Breast epithelium (tissue), 4 donors: ENCODE measurements at regions of chr7 and their contacts with region 1.

Region 1: GRCh38 chr7:92854501-92855238 is 18.3 kb upstream of the CDK6 start:
- DNase-seq: no peak
- H3K4me3 ChIP-seq: no peak overlapping the region
- H3K27ac ChIP-seq: no peak overlapping the region
- H3K4me1 ChIP-seq: no peaks in the 10 kb centered on the region
- H3K27me3 ChIP-seq: no peaks in the 10 kb centered on the region
- CTCF ChIP-seq: no peak
- POLR2A ChIP-seq: no peak

Region 2: GRCh38 chr7:92833024-92833765 is 21.5 kb before region 1 on chr7:
- intact Hi-C with region 1: no loop called
- DNase-seq: peak; percentile 77 to 83
- H3K4me3 ChIP-seq: peak overlapping the region; percentile 81 to 85 (median 83)
- H3K27ac ChIP-seq: peak overlapping the region; percentile 81 to 88
- H3K4me1 ChIP-seq: no peaks in the 10 kb centered on the region
- H3K27me3 ChIP-seq: no peaks in the 10 kb centered on the region
- CTCF ChIP-seq: peak; percentile 66 to 79 (median 75)
- POLR2A ChIP-seq: no peak

Region 3: GRCh38 chr7:93062599-93062998 is 207.9 kb after region 1 on chr7:
- intact Hi-C with region 1: loop called (anchors 10 kb)
- DNase-seq: no peak
- H3K4me3 ChIP-seq: no peak overlapping the region
- H3K27ac ChIP-seq: no peak overlapping the region
- H3K4me1 ChIP-seq: no peaks in the 10 kb centered on the region
- H3K27me3 ChIP-seq: no peaks in the 10 kb centered on the region
- CTCF ChIP-seq: no peak
- POLR2A ChIP-seq: no peak